ENCODE measurements at regions of chr4 and their contacts with region 1.

Region 1: GRCh38 chr4:14671146-14671545 is 331.1 kb upstream of the CPEB2 start:
- DNase-seq: no peak
- H3K4me3 Mint-ChIP-seq: no peak overlapping the region
- H3K27ac Mint-ChIP-seq: no peak overlapping the region
- H3K4me1 Mint-ChIP-seq: no peaks in the 10 kb centered on the region
- H3K27me3 Mint-ChIP-seq: peaks cover 26% of the 10 kb centered on the region

Region 2: GRCh38 chr4:14615671-14616070 is 55.5 kb before region 1 on chr4:
- CTCF ChIA-PET with region 1: no interaction called
- intact Hi-C with region 1: loop called (anchors 10 kb)
- DNase-seq: no peak
- H3K4me3 Mint-ChIP-seq: no peak overlapping the region
- H3K27ac Mint-ChIP-seq: no peak overlapping the region
- H3K4me1 Mint-ChIP-seq: no peaks in the 10 kb centered on the region
- H3K27me3 Mint-ChIP-seq: peaks cover 21% of the 10 kb centered on the region

Region 3: DNA sequence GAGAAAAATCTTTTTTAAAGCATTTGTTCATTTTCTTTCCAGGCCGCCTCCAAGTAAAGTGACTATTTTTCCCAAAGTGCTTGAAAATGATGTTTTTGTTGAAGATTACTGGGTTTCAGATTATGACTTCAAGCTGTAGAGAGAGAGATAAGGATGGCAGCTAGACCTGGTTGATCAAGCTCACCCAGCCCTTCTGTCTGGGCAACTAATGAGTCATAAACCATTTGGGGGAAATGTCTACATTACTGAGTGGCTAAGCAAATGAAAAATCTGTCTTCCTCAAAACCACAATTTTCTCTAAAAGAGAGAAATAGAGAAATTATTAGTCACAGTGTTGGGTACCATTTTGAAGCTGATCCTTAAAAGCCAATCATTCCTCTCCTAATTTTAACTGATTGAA is 24.3 kb before region 1 on chr4:
- CTCF ChIA-PET with region 1: no interaction called
- intact Hi-C with region 1: no loop called
- DNase-seq: no peak
- H3K4me3 Mint-ChIP-seq: no peak overlapping the region
- H3K27ac Mint-ChIP-seq: no peak overlapping the region
- H3K4me1 Mint-ChIP-seq: no peaks in the 10 kb centered on the region
- H3K27me3 Mint-ChIP-seq: no peaks in the 10 kb centered on the region